ENCODE measurements at regions of chr7 and their contacts with region 1.

Region 1: GRCh38 chr7:28062197-28062991 is 118.2 kb downstream of the JAZF1 start:
- DNase-seq: peak; percentile 81
- ATAC-seq: peak; percentile 79
- H3K4me3 Mint-ChIP-seq: no peak overlapping the region
- H3K27ac Mint-ChIP-seq: no peak overlapping the region
- H3K4me1 Mint-ChIP-seq: peaks cover 4% of the 10 kb centered on the region
- H3K27me3 Mint-ChIP-seq: peaks cover 2% of the 10 kb centered on the region
- CTCF ChIP-seq: peak; percentile 42

Region 2: GRCh38 chr7:27952456-27953285 is 109.7 kb before region 1 on chr7:
- CTCF ChIA-PET with region 1: no interaction called
- POLR2A ChIA-PET with region 1: no interaction called
- intact Hi-C with region 1: no loop called
- DNase-seq: no peak
- ATAC-seq: no peak
- H3K4me3 Mint-ChIP-seq: no peak overlapping the region
- H3K27ac Mint-ChIP-seq: no peak overlapping the region
- H3K4me1 Mint-ChIP-seq: peaks cover 25% of the 10 kb centered on the region
- H3K27me3 Mint-ChIP-seq: no peaks in the 10 kb centered on the region
- CTCF ChIP-seq: no peak

Region 3: GRCh38 chr7:27991006-27991528 is 71.3 kb before region 1 on chr7:
- CTCF ChIA-PET with region 1: no interaction called
- POLR2A ChIA-PET with region 1: no interaction called
- intact Hi-C with region 1: no loop called
- DNase-seq: no peak
- ATAC-seq: no peak
- H3K4me3 Mint-ChIP-seq: no peak overlapping the region
- H3K27ac Mint-ChIP-seq: peak overlapping the region; percentile 27
- H3K4me1 Mint-ChIP-seq: peaks cover 6% of the 10 kb centered on the region
- H3K27me3 Mint-ChIP-seq: no peaks in the 10 kb centered on the region
- CTCF ChIP-seq: no peak

Region 4: DNA sequence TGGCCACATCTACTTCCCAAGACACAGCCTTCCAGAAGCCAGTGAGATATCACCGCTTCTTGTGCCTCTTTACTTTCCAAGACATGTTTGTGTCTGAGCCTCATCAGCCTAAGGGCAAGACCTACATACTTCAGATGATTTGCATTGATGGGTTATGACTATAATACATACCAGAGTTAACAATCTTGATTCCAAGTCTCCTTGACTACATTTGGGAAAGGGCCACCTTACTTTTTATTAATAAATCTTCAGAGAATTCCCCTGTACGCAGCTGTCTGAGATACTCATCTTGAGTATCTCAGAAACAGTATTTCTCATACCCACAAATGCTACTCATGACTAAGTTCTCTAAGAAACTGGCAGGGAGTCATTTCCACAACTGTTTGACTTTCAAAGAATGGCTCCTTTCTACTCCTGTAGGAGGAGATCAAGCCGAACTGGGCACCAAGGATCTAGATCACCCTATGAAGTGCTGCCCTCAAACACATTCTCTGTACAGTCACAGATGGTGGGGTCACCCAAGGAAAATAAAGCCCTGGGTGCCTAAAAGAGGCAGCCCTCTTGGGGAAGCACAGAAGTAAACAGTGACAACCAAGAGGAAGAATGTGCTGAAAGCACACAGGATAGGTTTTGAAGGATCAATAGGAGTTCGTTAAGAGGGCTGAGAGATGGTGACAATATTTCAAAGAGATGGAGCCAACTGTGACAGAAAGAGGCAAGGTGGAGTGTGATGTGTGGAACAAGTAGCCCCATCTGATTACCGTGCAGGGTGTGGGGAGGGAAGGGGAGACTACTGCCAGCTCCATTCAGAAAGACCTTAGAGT is 20.7 kb before region 1 on chr7:
- CTCF ChIA-PET with region 1: interaction called, 10 read pairs
- POLR2A ChIA-PET with region 1: no interaction called
- intact Hi-C with region 1: no loop called
- DNase-seq: no peak
- ATAC-seq: peak; percentile 49
- H3K4me3 Mint-ChIP-seq: no peak overlapping the region
- H3K27ac Mint-ChIP-seq: peak overlapping the region; percentile 68
- H3K4me1 Mint-ChIP-seq: peaks cover 25% of the 10 kb centered on the region
- H3K27me3 Mint-ChIP-seq: no peaks in the 10 kb centered on the region
- CTCF ChIP-seq: no peak